Gastrocnemius medialis (tissue), 4 donors: ENCODE measurements at regions of chr4 and their contacts with region 1.

Region 1: GRCh38 chr4:41990365-41991111 is at the start of gene SLC30A9:
- DNase-seq: peak; percentile 93
- ATAC-seq: peak; percentile 99 to 100
- H3K4me3 ChIP-seq: peak within 1 kb of the TSS; percentile 91 to 98 (median 94)
- H3K27ac ChIP-seq: peak within 1 kb of the TSS; percentile 81 to 90 (median 86)
- H3K4me1 ChIP-seq: peaks cover 43 to 45% of the 10 kb centered on the region in 2 donors
- H3K27me3 ChIP-seq: no peaks in the 10 kb centered on the region
- CTCF ChIP-seq: peak; percentile 29 to 60 (median 45)
- POLR2A ChIP-seq: peak; percentile 75 to 81
- total RNA-seq, gene SLC30A9: 24.5 to 35.6 (median 27.3) TPM

Region 2: DNA sequence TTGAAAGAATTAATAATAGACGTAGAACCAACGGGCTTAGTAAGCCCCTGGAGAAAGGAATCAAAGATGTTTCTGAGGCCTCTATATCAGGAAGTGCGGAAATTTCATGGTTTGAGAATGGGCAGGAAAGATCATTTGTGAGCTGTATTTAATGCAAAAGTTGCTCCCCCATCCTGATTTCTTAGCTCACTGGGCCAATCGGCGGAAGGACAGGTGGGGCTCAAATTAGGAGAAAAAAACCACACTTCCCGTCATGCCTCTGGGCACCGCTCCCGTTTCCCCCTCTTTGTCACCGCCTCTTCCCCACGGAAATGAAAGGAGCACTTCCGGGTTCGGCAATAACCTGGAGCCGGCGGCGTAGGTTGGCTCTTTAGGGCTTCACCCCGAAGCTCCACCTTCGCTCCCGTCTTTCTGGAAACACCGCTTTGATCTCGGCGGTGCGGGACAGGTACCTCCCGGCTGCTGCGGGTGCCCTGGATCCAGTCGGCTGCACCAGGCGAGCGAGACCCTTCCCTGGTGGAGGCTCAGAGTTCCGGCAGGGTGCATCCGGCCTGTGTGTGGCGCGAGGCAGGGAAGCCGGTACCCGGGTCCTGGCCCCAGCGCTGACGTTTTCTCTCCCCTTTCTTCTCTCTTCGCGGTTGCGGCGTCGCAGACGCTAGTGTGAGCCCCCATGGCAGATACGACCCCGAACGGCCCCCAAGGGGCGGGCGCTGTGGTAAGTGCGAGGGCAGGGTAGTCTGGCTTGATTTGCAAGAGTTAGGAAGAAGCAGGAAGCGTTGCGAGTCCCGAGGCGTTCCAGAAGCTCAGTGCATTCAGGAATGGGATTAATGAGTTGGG is 55.5 kb before region 1 on chr4 and contains the start of gene TMEM33:
- in situ Hi-C with region 1: no loop called
- intact Hi-C with region 1: loop called (anchors 1 kb)
- DNase-seq: peak; percentile 82 to 84
- ATAC-seq: peak; percentile 96 to 97
- H3K4me3 ChIP-seq: peak within 1 kb of the TSS; percentile 78 to 99 (median 88)
- H3K27ac ChIP-seq: peak within 1 kb of the TSS; percentile 90 to 92 (median 90)
- H3K4me1 ChIP-seq: peaks cover 27 to 32% of the 10 kb centered on the region in 2 donors
- H3K27me3 ChIP-seq: no peaks in the 10 kb centered on the region
- CTCF ChIP-seq: peak in 2 of 5 experiments; percentile 25 to 28
- POLR2A ChIP-seq: peak; percentile 74 to 87
- total RNA-seq, gene TMEM33: 20.6 to 29.3 (median 26.4) TPM

Region 3: GRCh38 chr4:42048407-42048806 is 57.9 kb after region 1 on chr4:
- in situ Hi-C with region 1: no loop called
- intact Hi-C with region 1: no loop called
- DNase-seq: no peak
- ATAC-seq: no peak
- H3K4me3 ChIP-seq: no peak overlapping the region
- H3K27ac ChIP-seq: no peak overlapping the region
- H3K4me1 ChIP-seq: no peaks in the 10 kb centered on the region
- H3K27me3 ChIP-seq: no peaks in the 10 kb centered on the region
- CTCF ChIP-seq: no peak
- POLR2A ChIP-seq: no peak

Region 4: GRCh38 chr4:42574870-42575430 is 584.4 kb after region 1 on chr4:
- in situ Hi-C with region 1: no loop called
- intact Hi-C with region 1: loop called (anchors 5 kb)
- DNase-seq: no peak
- ATAC-seq: no peak
- H3K4me3 ChIP-seq: no peak overlapping the region
- H3K27ac ChIP-seq: no peak overlapping the region
- H3K4me1 ChIP-seq: peaks cover 10 to 14% of the 10 kb centered on the region in 2 donors
- H3K27me3 ChIP-seq: no peaks in the 10 kb centered on the region
- CTCF ChIP-seq: no peak
- POLR2A ChIP-seq: no peak